ENCODE measurements at regions of chr5 and their contacts with region 1.

Region 1: GRCh38 chr5:39231705-39232525 is 12.6 kb upstream of the FYB1 start:
- DNase-seq: peak; percentile 45
- H3K4me3 Mint-ChIP-seq: no peak overlapping the region
- H3K27ac Mint-ChIP-seq: peak overlapping the region; percentile 83
- H3K4me1 Mint-ChIP-seq: peaks cover 19% of the 10 kb centered on the region
- H3K27me3 Mint-ChIP-seq: no peaks in the 10 kb centered on the region

Region 2: DNA sequence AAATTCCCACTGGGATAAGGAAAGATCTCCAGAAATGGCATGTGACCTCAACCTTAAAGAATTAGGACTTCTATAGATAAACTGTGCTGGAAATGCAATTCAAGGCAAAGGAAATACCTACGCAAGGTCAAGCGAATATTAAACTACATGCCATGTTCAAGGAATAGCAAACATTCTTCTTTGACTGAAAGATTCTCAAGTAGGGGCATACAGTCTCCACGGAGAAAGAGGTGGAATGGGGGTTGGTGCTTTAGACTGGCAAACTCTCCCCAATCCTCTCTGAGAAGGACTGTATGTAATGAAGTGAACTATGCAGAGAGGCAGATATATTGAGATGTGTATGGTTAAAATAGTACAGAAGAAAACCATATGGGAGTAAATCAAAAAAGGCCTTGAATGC is 163.8 kb before region 1 on chr5:
- CTCF ChIA-PET with region 1: no interaction called
- POLR2A ChIA-PET with region 1: no interaction called
- DNase-seq: no peak
- H3K4me3 Mint-ChIP-seq: no peak overlapping the region
- H3K27ac Mint-ChIP-seq: no peak overlapping the region
- H3K4me1 Mint-ChIP-seq: peaks cover 38% of the 10 kb centered on the region
- H3K27me3 Mint-ChIP-seq: no peaks in the 10 kb centered on the region

Region 3: GRCh38 chr5:39080597-39081204 is 151.2 kb before region 1 on chr5:
- CTCF ChIA-PET with region 1: no interaction called
- POLR2A ChIA-PET with region 1: no interaction called
- DNase-seq: peak; percentile 46
- H3K4me3 Mint-ChIP-seq: no peak overlapping the region
- H3K27ac Mint-ChIP-seq: no peak overlapping the region
- H3K4me1 Mint-ChIP-seq: peaks cover 25% of the 10 kb centered on the region
- H3K27me3 Mint-ChIP-seq: peaks cover 33% of the 10 kb centered on the region

Region 4: GRCh38 chr5:39274398-39275085 is 42.6 kb after region 1 on chr5:
- CTCF ChIA-PET with region 1: no interaction called
- POLR2A ChIA-PET with region 1: interaction called, 12 read pairs
- DNase-seq: no peak
- H3K4me3 Mint-ChIP-seq: peak overlapping the region; percentile 72
- H3K27ac Mint-ChIP-seq: peak overlapping the region; percentile 89
- H3K4me1 Mint-ChIP-seq: peaks cover 47% of the 10 kb centered on the region
- H3K27me3 Mint-ChIP-seq: no peaks in the 10 kb centered on the region

Region 5: GRCh38 chr5:39283231-39283818 is 51.4 kb after region 1 on chr5:
- CTCF ChIA-PET with region 1: interaction called, 14 read pairs
- POLR2A ChIA-PET with region 1: interaction called, 5 read pairs
- DNase-seq: peak; percentile 60
- H3K4me3 Mint-ChIP-seq: no peak overlapping the region
- H3K27ac Mint-ChIP-seq: no peak overlapping the region
- H3K4me1 Mint-ChIP-seq: peaks cover 16% of the 10 kb centered on the region
- H3K27me3 Mint-ChIP-seq: peaks cover 13% of the 10 kb centered on the region